Aorta (tissue), 5 donors: ENCODE measurements at regions of chr17 and their contacts with region 1.

Region 1: GRCh38 chr17:21376759-21377690 is 868 bp downstream of the KCNJ12 start:
- DNase-seq: no peak
- ATAC-seq: peak; percentile 49
- H3K4me3 ChIP-seq: peak overlapping the region; percentile 15 to 38
- H3K27ac ChIP-seq: no peak overlapping the region
- H3K4me1 ChIP-seq: no peaks in the 10 kb centered on the region
- H3K27me3 ChIP-seq: no peaks in the 10 kb centered on the region

Region 2: GRCh38 chr17:21049457-21049856 is 327.6 kb before region 1 on chr17:
- intact Hi-C with region 1: no loop called
- DNase-seq: no peak
- ATAC-seq: no peak
- H3K4me3 ChIP-seq: no peak overlapping the region
- H3K27ac ChIP-seq: no peak overlapping the region
- H3K4me1 ChIP-seq: no peaks in the 10 kb centered on the region
- H3K27me3 ChIP-seq: no peaks in the 10 kb centered on the region

Region 3: GRCh38 chr17:21275579-21276263 is 101.3 kb before region 1 on chr17:
- intact Hi-C with region 1: loop called in 1 of 2 experiments (anchors 5 kb)
- DNase-seq: peak; percentile 97 to 99
- ATAC-seq: peak; percentile 96
- H3K4me3 ChIP-seq: peak overlapping the region; percentile 44 to 69
- H3K27ac ChIP-seq: no peak overlapping the region
- H3K4me1 ChIP-seq: no peaks in the 10 kb centered on the region
- H3K27me3 ChIP-seq: no peaks in the 10 kb centered on the region